ENCODE measurements at regions of chr12 and their contacts with region 1.

Region 1: DNA sequence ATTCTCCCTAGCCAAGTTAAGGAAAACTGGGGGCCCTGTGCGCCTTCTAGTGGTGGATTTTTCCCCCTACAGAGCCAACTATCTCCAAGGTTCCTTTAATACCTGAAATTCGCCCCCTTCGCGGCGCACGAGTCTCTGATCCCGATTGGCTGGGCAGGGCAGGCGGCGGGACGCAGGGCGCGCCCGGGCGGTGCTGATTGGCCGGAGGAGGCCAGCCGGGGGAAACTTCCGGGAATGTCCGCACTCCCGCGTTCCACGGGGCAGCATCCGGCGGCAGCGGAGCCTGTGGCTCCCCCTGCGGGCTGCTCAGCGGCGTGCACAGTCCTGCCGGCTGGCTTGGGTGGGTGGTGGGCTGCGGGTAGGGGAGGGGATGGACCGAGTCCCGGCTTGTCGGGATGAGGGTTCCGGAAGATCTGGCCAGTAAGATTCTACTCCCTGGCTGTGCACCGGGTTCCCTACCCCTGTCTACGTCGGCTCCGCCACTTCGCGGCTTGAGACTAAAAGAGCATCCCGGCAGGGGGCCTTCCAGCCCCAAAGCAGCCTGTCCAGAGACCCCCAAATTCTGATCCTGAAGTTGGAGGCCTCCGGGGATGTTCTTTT is at the start of gene NABP2:
- DNase-seq: peak; percentile 99
- ATAC-seq: peak; percentile 81
- H3K4me3 ChIP-seq: peak within 1 kb of the TSS; percentile 88
- H3K27ac ChIP-seq: peak within 1 kb of the TSS; percentile 21; the same call in 1 of the 2 replicates
- H3K4me1 ChIP-seq: peaks cover 22% of the 10 kb centered on the region
- H3K27me3 ChIP-seq: no peaks in the 10 kb centered on the region
- CTCF ChIP-seq: peak; percentile 94
- total RNA-seq, gene NABP2: 91.6 and 98.6 TPM in 2 replicates

Region 2: DNA sequence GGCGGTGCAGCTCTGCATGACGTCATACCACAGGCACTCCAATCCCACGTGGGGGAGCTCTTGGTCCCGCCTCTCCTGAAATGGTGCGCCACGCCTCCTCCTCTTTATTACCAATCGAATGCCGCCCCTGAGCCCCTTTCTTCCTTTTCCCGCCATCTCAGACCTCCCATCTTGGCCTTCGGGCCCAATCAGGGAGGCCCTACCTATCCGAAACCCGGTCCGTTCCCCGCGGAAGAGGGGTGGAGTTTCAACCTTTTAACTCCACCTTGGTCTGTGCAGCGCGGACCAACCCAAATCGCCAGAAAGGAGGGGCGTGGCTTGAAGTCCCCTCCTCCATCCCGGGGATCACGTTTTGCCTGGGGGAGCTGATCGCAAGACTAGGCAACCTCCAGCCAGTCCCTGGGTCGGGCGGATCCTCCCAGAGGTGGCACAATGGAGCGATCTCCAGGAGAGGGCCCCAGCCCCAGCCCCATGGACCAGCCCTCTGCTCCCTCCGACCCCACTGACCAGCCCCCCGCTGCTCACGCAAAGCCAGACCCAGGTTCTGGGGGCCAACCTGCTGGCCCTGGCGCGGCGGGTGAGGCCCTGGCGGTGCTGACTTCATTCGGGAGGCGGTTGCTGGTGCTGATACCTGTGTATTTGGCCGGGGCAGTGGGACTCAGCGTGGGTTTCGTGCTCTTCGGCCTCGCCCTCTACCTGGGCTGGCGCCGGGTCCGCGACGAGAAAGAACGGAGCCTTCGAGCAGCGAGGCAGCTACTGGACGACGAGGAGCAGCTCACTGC is 96.1 kb before region 1 on chr12 and contains the start of gene ESYT1:
- CTCF ChIA-PET with region 1: no interaction called
- POLR2A ChIA-PET with region 1: interaction called, 17 read pairs
- intact Hi-C with region 1: loop called (anchors 1 kb)
- DNase-seq: peak; percentile 100
- ATAC-seq: peak; percentile 90
- H3K4me3 ChIP-seq: peak within 1 kb of the TSS; percentile 96
- H3K27ac ChIP-seq: peak within 1 kb of the TSS; percentile 39; the same call in 1 of the 2 replicates
- H3K4me1 ChIP-seq: peaks cover 33% of the 10 kb centered on the region
- H3K27me3 ChIP-seq: no peaks in the 10 kb centered on the region
- CTCF ChIP-seq: no peak
- total RNA-seq, gene ESYT1: 120 and 176 TPM in 2 replicates

Region 3: DNA sequence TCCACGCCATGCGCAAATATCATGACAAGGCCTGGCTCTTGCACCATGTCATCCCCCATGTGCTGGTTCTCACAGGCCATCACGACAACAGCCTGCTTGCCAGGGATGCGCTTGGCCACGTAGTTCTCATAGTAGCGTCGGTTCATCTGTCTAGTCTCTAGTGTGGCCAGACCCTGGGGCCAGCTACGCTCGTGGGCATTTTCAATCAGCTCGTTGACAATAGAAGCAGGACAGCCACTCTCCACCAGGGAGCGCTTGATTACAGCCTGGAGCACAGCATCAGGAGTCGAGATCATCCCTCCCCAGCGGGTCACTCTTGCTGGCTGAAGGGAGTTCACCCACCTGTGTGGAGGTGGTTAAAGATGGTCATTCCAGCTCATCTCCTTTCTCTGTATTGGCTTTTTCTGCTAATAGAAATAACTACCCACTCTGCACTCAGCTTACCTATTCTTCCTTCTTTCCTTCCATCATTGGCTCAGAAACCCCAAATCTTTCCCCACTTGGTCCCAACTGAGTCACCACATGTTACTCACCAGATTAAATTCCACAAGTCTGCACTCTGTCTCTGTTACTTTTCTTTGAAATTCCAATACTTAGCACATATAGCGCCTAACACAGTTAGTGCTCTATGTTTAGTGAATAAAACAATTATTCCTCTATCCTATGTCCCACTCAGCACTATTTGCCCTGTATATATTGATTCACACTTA is 17.6 kb before region 1 on chr12:
- CTCF ChIA-PET with region 1: interaction called, 6 read pairs
- POLR2A ChIA-PET with region 1: no interaction called
- intact Hi-C with region 1: loop called (anchors 1 kb)
- DNase-seq: peak; percentile 64
- ATAC-seq: peak; percentile 75
- H3K4me3 ChIP-seq: no peak overlapping the region
- H3K27ac ChIP-seq: no peak overlapping the region
- H3K4me1 ChIP-seq: no peaks in the 10 kb centered on the region
- H3K27me3 ChIP-seq: no peaks in the 10 kb centered on the region
- CTCF ChIP-seq: peak; percentile 76

Region 4: DNA sequence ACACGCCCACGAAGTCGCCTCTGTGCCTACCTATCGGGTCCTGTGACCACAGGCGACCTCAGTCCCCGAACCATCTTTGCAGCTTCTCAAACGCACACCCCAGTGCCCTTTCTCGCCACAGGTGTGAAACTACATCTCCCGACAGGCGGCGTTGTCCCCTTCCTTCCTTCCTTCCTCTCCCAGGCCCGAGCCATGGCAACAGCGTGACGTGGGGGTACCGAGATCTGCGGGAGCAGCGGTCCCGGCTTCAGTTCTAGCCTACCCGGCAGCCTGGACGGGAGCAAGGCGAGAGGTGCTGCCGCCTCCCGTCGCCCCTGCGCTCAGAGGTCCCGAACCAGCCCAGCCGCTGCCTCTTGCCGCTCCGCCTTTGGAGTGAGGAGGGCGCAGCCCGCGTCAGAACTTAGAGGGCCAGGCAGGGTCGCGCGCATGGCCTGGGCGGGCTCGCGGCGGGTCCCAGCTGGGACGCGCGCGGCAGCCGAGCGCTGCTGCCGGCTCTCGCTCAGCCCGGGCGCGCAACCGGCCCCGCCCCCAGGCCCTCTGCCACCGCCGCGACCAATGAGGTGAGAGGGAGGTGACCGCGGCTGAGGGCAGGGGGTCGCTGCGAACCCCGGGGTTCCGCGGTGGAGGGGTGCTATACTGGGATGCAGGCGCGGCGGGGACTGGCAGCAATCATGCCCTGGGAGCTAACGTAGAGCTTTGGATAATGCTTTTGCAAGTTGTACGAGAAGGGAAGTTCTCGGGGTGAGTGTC is 42.7 kb after region 1 on chr12 and contains the start of gene COQ10A:
- CTCF ChIA-PET with region 1: no interaction called
- POLR2A ChIA-PET with region 1: no interaction called
- intact Hi-C with region 1: loop called (anchors 5 kb)
- DNase-seq: peak; percentile 88
- ATAC-seq: peak; percentile 92
- H3K4me3 ChIP-seq: peak within 1 kb of the TSS; percentile 93
- H3K27ac ChIP-seq: peak within 1 kb of the TSS; percentile 60
- H3K4me1 ChIP-seq: peaks cover 3% of the 10 kb centered on the region
- H3K27me3 ChIP-seq: no peaks in the 10 kb centered on the region
- CTCF ChIP-seq: peak; percentile 69
- total RNA-seq, gene COQ10A: 9.2 and 9.8 TPM in 2 replicates